HEK293 (cell line): ENCODE measurements at regions of chr19 and their contacts with region 1.

Region 1: DNA sequence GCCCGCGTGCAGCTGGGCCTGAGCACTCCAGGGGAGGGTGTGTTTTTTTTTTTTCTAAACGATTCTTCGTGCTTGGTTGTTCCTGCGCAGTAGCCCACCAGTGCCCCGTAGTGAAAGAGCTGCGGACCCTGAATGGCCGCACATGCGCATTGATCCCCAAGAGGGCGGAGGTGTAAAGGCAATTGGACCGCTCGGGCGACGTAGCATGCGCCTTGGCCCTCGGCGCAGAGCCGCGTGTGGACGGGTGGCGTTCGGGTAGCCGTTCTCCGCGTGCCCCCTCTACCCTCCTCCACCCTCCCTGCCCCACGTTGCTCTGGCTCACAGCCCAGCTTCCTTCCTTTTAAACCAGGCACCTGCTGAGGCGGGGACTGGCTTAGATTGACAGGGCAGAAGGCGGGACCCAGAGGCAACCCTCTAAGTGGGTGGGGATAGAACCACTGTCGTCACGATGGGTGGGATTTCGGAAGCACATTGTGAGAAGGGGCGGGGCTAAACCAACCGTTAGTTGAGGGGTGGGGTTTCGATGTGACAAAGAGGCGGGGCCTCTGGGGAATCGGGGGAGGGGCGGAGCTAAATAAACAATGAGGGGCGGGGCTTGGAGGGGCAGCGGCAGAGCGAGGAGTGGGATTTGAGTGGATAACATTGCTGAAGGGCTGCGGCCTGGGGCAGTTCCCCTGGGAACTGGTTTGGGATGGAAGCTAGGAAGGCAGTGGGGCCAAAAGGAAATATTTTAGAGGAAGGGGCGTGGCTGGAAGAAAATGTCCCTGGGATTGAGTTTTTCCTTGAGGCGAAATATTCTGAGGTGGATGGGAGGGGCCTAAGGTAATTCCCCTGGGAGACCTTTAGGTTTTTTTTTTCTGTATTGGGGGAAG is 543 bp upstream of the NUP62 start:
- H3K4me3 ChIP-seq: peak overlapping the region; percentile 85
- H3K27ac ChIP-seq: peak overlapping the region; percentile 99
- H3K4me1 ChIP-seq: peaks cover 9% of the 10 kb centered on the region
- CTCF ChIP-seq: no peak

Region 2: GRCh38 chr19:49727217-49728030 is 202.4 kb before region 1 on chr19:
- CTCF ChIA-PET with region 1: no interaction called
- POLR2A ChIA-PET with region 1: no interaction called
- H3K4me3 ChIP-seq: no peak overlapping the region
- H3K27ac ChIP-seq: no peak overlapping the region
- H3K4me1 ChIP-seq: no peaks in the 10 kb centered on the region
- CTCF ChIP-seq: no peak

Region 3: GRCh38 chr19:49850473-49851342 is 79.1 kb before region 1 on chr19 and contains the start of gene PTOV1:
- CTCF ChIA-PET with region 1: no interaction called
- POLR2A ChIA-PET with region 1: interaction called, 15 read pairs
- H3K4me3 ChIP-seq: peak within 1 kb of the TSS; percentile 76
- H3K27ac ChIP-seq: peak within 1 kb of the TSS; percentile 99
- H3K4me1 ChIP-seq: peaks cover 17% of the 10 kb centered on the region; the same call in 1 of the 2 replicates
- CTCF ChIP-seq: no peak

Region 4: GRCh38 chr19:49869441-49870176 is 60.2 kb before region 1 on chr19:
- CTCF ChIA-PET with region 1: no interaction called
- POLR2A ChIA-PET with region 1: interaction called, 41 read pairs
- H3K4me3 ChIP-seq: peak overlapping the region; percentile 40
- H3K27ac ChIP-seq: peak overlapping the region; percentile 92
- H3K4me1 ChIP-seq: peaks cover 25% of the 10 kb centered on the region
- CTCF ChIP-seq: no peak

Region 5: GRCh38 chr19:49889687-49890348 is 40.0 kb before region 1 on chr19:
- CTCF ChIA-PET with region 1: no interaction called
- POLR2A ChIA-PET with region 1: interaction called, 15 read pairs
- H3K4me3 ChIP-seq: peak overlapping the region; percentile 32
- H3K27ac ChIP-seq: no peak overlapping the region
- H3K4me1 ChIP-seq: no peaks in the 10 kb centered on the region
- CTCF ChIP-seq: no peak

Region 6: GRCh38 chr19:49916842-49917733 is 12.8 kb before region 1 on chr19:
- CTCF ChIA-PET with region 1: interaction called, 4 read pairs
- POLR2A ChIA-PET with region 1: interaction called, 25 read pairs
- H3K4me3 ChIP-seq: no peak overlapping the region
- H3K27ac ChIP-seq: peak overlapping the region; percentile 37; the same call in 1 of the 2 replicates
- H3K4me1 ChIP-seq: no peaks in the 10 kb centered on the region; the same call in 1 of the 2 replicates
- CTCF ChIP-seq: 0 out of 2 replicates have a peak, but pooled peaks have one; percentile 38